ENCODE measurements at regions of chrX and their contacts with region 1.

Region 1: DNA sequence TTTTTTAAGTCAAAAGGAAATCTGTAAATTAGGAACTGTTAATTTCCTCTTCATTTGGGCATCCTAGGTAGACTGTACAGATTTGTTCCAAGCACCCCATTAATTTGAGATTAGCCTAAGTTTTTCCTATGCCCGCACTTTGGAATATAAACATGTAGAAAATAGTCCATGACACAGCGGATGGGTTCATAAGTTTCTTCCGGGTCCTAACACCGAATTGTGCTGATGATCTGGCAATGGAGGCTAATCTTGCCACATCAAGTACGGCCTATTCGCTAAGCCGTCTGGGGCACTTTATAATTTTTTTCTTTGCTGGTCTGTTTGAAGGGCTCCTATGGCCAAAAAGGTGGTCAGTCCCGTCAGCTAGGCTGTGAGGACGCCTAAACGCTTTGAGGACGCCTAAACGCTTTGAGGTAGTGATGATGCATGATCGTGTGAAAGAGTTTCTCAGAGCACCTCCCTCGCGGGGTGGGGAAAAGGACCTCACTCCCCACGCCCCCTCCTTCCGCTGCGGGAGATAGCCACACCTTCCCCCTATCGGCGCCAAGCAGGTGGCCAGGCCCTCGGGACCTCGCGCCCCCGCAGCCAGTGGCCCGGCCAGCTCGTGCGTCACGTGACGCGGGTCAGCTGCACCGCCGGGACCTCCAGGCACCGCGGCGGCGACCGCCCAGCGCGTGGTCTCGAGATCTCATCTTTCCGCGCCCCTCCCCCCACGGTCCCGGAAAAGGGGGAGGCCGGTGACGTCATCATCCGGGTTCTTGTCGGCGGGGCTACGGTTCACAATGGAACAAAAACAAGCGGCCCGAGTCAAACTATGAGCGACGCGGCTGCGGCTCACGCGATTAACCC is 977 bp upstream of the USP9X start:
- DNase-seq: peak; percentile 94 to 99 (median 97)
- H3K4me3 ChIP-seq: peak overlapping the region; percentile 83
- H3K4me3 Mint-ChIP-seq: peak overlapping the region; percentile 91 to 99 (median 96)
- H3K27ac ChIP-seq: peak overlapping the region; percentile 96
- H3K27ac Mint-ChIP-seq: peak overlapping the region; percentile 91 to 100 (median 99)
- H3K4me1 ChIP-seq: peaks cover 15% of the 10 kb centered on the region
- H3K4me1 Mint-ChIP-seq: peaks cover 28 to 40% (median 36%) of the 10 kb centered on the region in 3 donors
- H3K27me3 ChIP-seq: no peaks in the 10 kb centered on the region
- H3K27me3 Mint-ChIP-seq: peaks cover 0 to 15% of the 10 kb centered on the region in 2 donors

Region 2: GRCh38 chrX:41108007-41108406 is 23.7 kb after region 1 on chrX:
- CTCF ChIA-PET with region 1: interaction called, 3 read pairs
- POLR2A ChIA-PET with region 1: interaction called, 13 read pairs
- DNase-seq: no peak
- H3K4me3 ChIP-seq: no peak overlapping the region
- H3K4me3 Mint-ChIP-seq: peak overlapping the region in 4 of 7 donors; percentile 24 to 42 (median 40)
- H3K27ac ChIP-seq: no peak overlapping the region
- H3K27ac Mint-ChIP-seq: peak overlapping the region in 4 of 8 donors; percentile 33 to 88 (median 50)
- H3K4me1 ChIP-seq: peaks cover 38% of the 10 kb centered on the region
- H3K4me1 Mint-ChIP-seq: peaks cover 65 to 82% (median 82%) of the 10 kb centered on the region in 3 donors
- H3K27me3 ChIP-seq: no peaks in the 10 kb centered on the region
- H3K27me3 Mint-ChIP-seq: no peaks in the 10 kb centered on the region

Region 3: GRCh38 chrX:41116948-41117347 is 32.7 kb after region 1 on chrX:
- CTCF ChIA-PET with region 1: interaction called, 9 read pairs
- POLR2A ChIA-PET with region 1: interaction called, 20 read pairs
- DNase-seq: peak in 2 of 5 donors; percentile 26 to 46
- H3K4me3 ChIP-seq: no peak overlapping the region
- H3K4me3 Mint-ChIP-seq: peak overlapping the region; percentile 43 to 78 (median 61)
- H3K27ac ChIP-seq: no peak overlapping the region
- H3K27ac Mint-ChIP-seq: peak overlapping the region; percentile 32 to 93 (median 64)
- H3K4me1 ChIP-seq: peaks cover 36% of the 10 kb centered on the region
- H3K4me1 Mint-ChIP-seq: peaks cover 61 to 80% (median 70%) of the 10 kb centered on the region in 3 donors
- H3K27me3 ChIP-seq: no peaks in the 10 kb centered on the region
- H3K27me3 Mint-ChIP-seq: no peaks in the 10 kb centered on the region